Body of pancreas (tissue), 4 donors: ENCODE measurements at regions of chr1 and their contacts with region 1.

Region 1: DNA sequence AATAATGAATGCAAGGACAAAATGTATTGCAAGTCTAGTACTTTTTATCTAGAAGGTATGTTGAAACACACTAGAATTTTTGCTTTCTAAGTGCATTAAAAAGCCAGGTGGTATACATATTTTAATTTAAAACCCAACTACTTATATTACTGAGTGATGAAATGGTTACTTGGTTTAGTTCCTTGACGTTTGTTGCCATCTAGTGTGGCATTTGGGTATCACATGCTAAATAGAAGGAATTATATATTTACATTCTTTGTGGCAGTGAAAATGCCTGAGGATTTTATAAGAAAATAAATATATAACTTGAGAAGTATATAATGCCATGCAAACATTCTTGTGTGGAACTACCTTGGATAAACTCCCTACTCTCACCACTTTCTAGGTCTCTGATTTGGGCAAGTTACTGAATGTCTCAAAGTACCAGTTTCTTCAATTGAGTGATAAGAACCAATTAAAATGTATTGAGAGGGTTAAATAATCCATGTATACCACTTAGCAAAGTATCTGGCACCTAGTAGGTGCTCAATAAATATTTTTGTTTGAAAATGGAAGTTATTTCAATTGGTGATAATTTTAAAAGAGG is 69.6 kb downstream of the SDCCAG8 start:
- DNase-seq: peak in 2 of 4 donors; percentile 16 to 30
- ATAC-seq: no peak
- H3K4me3 ChIP-seq: no peak overlapping the region
- H3K27ac ChIP-seq: no peak overlapping the region
- H3K4me1 ChIP-seq: no peaks in the 10 kb centered on the region
- H3K27me3 ChIP-seq: no peaks in the 10 kb centered on the region
- CTCF ChIP-seq: peak; percentile 23 to 86 (median 78)
- POLR2A ChIP-seq: no peak

Region 2: GRCh38 chr1:242454262-242455045 is 870.9 kb before region 1 on chr1:
- intact Hi-C with region 1: loop called (anchors 10 kb)
- DNase-seq: peak in 1 of 4 donors; percentile 5
- ATAC-seq: peak; percentile 58
- H3K4me3 ChIP-seq: no peak overlapping the region
- H3K27ac ChIP-seq: no peak overlapping the region
- H3K4me1 ChIP-seq: peaks cover 6% of the 10 kb centered on the region
- H3K27me3 ChIP-seq: peaks cover 0 to 7% of the 10 kb centered on the region in 2 donors
- CTCF ChIP-seq: peak; percentile 31 to 71 (median 58)
- POLR2A ChIP-seq: no peak